MCF 10A (cell line): ENCODE measurements at regions of chr2 and their contacts with region 1.

Region 1: DNA sequence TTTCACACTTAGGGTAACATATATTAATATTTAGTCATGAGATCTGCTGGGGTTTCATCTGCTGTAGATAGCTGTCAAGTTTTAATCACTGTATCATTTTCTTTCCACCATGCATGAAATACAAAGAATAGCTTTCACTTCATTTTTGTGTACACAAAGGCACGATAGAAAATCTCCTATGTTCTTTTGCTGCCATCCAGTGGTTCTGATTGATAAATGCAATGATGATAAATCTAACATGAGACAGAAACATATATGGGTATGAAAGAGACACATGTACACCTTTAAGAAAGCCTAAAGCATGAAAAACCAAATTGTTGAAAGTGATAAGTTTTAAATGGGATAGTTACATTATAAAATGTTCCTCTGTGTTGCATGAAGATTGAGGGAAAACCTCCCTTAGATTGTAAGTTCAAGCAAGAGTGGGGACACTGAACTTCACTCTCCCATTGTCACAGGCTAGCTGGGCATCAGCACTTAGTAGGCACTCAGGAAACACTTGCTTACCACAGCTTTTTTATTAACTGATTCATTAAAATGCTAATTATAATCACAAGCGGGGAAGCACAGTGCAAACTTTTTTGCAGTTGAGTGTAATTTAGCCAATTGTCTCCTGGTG is 31.2 kb downstream of the C1D start:
- DNase-seq: peak; percentile 71
- H3K4me3 Mint-ChIP-seq: no peak overlapping the region
- H3K27ac Mint-ChIP-seq: no peak overlapping the region
- H3K4me1 Mint-ChIP-seq: peaks cover 5% of the 10 kb centered on the region
- H3K27me3 Mint-ChIP-seq: no peaks in the 10 kb centered on the region
- CTCF ChIP-seq: peak; percentile 66

Region 2: GRCh38 chr2:67234439-67234838 is 797.2 kb before region 1 on chr2:
- CTCF ChIA-PET with region 1: interaction called, 3 read pairs
- POLR2A ChIA-PET with region 1: no interaction called
- intact Hi-C with region 1: loop called (anchors 5 kb)
- DNase-seq: peak; percentile 16
- H3K4me3 Mint-ChIP-seq: no peak overlapping the region
- H3K27ac Mint-ChIP-seq: no peak overlapping the region
- H3K4me1 Mint-ChIP-seq: no peaks in the 10 kb centered on the region
- H3K27me3 Mint-ChIP-seq: no peaks in the 10 kb centered on the region
- CTCF ChIP-seq: peak; percentile 38

Region 3: GRCh38 chr2:67476809-67477790 is 554.6 kb before region 1 on chr2:
- CTCF ChIA-PET with region 1: interaction called, 4 read pairs
- POLR2A ChIA-PET with region 1: interaction called, 5 read pairs
- intact Hi-C with region 1: loop called (anchors 5 kb)
- DNase-seq: peak; percentile 56
- H3K4me3 Mint-ChIP-seq: no peak overlapping the region
- H3K27ac Mint-ChIP-seq: peak overlapping the region; percentile 7
- H3K4me1 Mint-ChIP-seq: no peaks in the 10 kb centered on the region
- H3K27me3 Mint-ChIP-seq: no peaks in the 10 kb centered on the region
- CTCF ChIP-seq: peak; percentile 50

Region 4: DNA sequence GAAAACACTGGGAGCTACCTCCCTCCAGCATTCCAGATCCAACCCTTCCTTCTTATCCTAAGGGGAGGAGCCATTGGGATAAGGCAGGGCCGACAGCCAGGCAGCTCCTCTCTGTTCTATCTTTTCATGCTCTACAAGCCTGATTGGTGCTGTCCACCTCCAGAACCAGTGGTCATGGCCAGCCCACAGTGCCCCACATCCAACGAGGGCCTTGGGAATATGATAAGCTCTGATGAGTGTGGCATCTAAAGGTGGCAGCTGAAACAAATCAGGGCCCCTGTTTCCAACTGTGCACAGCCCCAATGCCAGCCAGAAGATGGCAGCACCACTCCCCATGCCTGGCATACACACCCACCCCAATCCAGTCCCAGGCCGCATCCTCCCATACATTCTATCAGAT is 298.1 kb before region 1 on chr2:
- CTCF ChIA-PET with region 1: interaction called, 8 read pairs
- POLR2A ChIA-PET with region 1: no interaction called
- intact Hi-C with region 1: loop called (anchors 1 kb)
- DNase-seq: peak; percentile 45
- H3K4me3 Mint-ChIP-seq: no peak overlapping the region
- H3K27ac Mint-ChIP-seq: no peak overlapping the region
- H3K4me1 Mint-ChIP-seq: no peaks in the 10 kb centered on the region
- H3K27me3 Mint-ChIP-seq: no peaks in the 10 kb centered on the region
- CTCF ChIP-seq: peak; percentile 36

Region 5: DNA sequence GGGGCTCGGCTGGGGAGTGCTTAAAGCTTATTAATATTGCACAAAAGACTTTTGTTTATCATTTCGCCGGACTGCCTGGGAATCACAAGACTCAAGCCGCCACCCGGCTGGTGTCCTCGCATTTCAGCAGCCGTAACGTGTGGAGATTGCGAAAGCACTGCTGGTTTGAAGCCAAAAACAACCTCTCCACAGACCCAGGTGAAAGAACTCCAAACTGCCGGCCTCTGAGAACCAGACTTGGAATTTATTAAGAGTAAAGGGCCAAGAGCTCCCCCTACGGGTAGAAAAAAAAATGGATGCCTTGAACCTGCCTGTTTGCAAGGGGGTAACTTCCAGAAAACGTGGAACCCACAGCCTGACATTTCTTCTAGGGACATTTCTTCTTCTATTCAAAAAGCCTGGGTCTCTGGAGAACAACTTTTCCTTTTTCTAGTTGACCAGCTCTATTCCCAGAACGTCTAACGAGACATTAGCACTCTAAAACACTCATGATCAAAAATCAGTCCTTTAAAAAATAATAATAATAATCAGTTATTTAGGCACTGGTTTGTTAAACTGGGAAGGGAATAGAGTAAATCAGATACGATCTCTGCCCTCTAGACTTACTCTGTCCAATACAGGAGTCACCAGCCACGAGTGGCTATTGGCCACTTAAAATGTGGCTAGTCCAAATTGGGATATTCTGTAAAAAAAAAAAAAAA is 185.1 kb before region 1 on chr2:
- CTCF ChIA-PET with region 1: interaction called, 8 read pairs
- POLR2A ChIA-PET with region 1: interaction called, 15 read pairs
- intact Hi-C with region 1: no loop called
- DNase-seq: peak; percentile 99
- H3K4me3 Mint-ChIP-seq: no peak overlapping the region
- H3K27ac Mint-ChIP-seq: peak overlapping the region; percentile 95
- H3K4me1 Mint-ChIP-seq: peaks cover 14% of the 10 kb centered on the region
- H3K27me3 Mint-ChIP-seq: no peaks in the 10 kb centered on the region
- CTCF ChIP-seq: peak; percentile 74

Region 6: DNA sequence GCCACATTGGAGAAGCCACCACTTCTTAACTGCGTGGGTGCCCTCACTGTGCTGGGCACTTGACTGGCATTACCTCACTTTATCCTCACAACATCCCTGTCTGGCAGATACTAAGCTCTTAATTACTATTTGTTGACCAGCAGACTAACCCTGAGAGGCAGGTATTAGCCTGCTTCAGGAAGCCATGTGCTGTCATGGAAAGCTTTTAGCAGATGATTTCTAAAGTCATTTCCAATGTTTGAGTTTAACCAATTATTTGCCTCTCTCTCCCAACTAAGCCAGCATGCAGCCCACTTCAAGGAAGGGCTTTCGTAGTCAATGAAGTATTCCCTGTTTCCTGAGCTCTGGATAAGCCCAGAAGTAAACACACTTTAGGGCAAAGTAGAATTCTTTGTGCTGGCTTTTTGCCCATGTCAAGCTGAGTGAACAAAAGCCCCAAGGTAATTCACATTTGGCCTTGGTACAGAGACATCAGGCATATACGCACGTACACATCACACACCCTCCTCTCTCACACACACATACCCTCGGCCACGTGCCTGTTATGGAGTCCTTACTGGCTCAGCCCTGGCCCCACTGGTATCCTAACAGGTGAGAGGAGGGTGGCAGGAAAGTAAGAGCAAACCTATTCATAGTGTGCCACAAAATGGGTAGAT is 77.4 kb before region 1 on chr2:
- CTCF ChIA-PET with region 1: interaction called, 3 read pairs
- POLR2A ChIA-PET with region 1: interaction called, 14 read pairs
- intact Hi-C with region 1: no loop called
- DNase-seq: peak; percentile 64
- H3K4me3 Mint-ChIP-seq: no peak overlapping the region
- H3K27ac Mint-ChIP-seq: no peak overlapping the region
- H3K4me1 Mint-ChIP-seq: peaks cover 17% of the 10 kb centered on the region
- H3K27me3 Mint-ChIP-seq: no peaks in the 10 kb centered on the region
- CTCF ChIP-seq: no peak

Region 7: DNA sequence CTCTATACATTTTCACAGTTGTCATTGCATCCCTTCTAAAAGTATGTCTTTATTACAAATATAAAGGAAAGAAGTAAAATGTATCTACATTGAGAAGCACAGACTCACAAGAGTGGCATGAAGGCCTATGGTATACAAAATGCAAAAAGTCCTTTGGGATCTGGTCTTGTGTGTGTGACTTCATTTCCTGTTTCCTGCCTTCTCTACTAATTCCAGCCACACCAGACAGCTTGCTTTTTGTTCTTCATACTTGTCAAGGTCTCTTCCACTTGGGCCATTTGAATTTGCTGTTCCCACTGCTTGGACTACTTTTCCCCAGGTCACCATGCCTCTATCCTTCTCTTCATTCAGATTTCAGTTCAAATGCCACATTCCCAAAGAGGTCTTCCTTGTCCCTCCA is 119.4 kb after region 1 on chr2:
- CTCF ChIA-PET with region 1: no interaction called
- POLR2A ChIA-PET with region 1: no interaction called
- intact Hi-C with region 1: no loop called
- DNase-seq: no peak
- H3K4me3 Mint-ChIP-seq: no peak overlapping the region
- H3K27ac Mint-ChIP-seq: no peak overlapping the region
- H3K4me1 Mint-ChIP-seq: peaks cover 9% of the 10 kb centered on the region
- H3K27me3 Mint-ChIP-seq: no peaks in the 10 kb centered on the region
- CTCF ChIP-seq: no peak